Right ventricle myocardium inferior (tissue), 1 donor: ENCODE measurements at regions of chr3 and their contacts with region 1.

Region 1: GRCh38 chr3:25856902-25857518 is 67.1 kb downstream of the OXSM start:
- DNase-seq: no peak
- ATAC-seq: no peak

Region 2: DNA sequence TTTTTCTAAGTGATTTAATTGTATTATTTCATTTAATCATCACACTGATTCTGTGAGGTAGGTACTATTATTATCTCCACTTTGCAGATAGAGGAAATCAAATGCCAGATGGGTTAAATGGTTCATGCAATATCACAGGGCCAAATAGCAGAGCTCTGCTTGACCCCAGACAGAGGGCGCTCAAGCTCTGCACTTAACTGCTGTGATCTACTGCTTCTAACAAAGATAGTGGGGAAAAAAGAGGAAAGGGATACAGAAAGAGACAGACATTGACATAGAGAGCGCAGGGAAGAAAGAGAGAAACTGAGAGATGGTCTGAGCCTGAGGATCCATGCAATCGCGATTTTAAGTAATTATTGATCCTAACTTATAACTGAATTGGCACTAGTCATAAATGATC is 1083.2 kb before region 1 on chr3:
- intact Hi-C with region 1: loop called (anchors 10 kb)
- DNase-seq: no peak
- ATAC-seq: peak; percentile 73

Region 3: GRCh38 chr3:25648107-25648535 is 208.9 kb before region 1 on chr3:
- intact Hi-C with region 1: loop called (anchors 1 kb)
- DNase-seq: no peak
- ATAC-seq: peak; percentile 83

Region 4: DNA sequence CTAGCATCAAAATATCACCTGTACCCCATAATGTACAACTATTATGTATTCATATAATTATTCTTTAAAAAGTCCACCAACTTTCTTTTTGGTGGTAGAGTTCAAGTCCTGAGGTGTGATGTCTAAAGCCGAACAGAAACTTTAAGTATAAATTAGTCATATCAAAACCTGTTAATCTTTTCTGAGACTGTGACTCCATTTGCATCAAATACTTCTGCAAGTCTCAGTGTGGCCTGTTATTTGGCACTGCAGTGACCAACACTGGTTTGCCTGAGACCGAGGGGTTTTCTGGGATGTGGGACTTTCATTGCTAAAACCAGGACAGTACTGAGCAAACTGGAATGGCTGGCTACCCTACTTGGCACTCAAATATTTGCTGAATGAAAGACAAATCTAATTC is 81.1 kb before region 1 on chr3:
- intact Hi-C with region 1: no loop called
- DNase-seq: no peak
- ATAC-seq: no peak

Region 5: GRCh38 chr3:25789596-25790556 is 67.1 kb before region 1 on chr3 and contains the start of gene OXSM:
- intact Hi-C with region 1: loop called (anchors 5 kb)
- DNase-seq: peak; percentile 95
- ATAC-seq: peak; percentile 98
- total RNA-seq, gene OXSM: 14.8 TPM

Region 6: GRCh38 chr3:25801786-25802185 is 55.2 kb before region 1 on chr3:
- intact Hi-C with region 1: no loop called
- DNase-seq: no peak
- ATAC-seq: no peak